Activated naive CD4-positive, alpha-beta T cell treated with anti-CD3 and anti-CD28 coated beads for 36 hours (primary cell): ENCODE measurements at regions of chr18 and their contacts with region 1.

Region 1: DNA sequence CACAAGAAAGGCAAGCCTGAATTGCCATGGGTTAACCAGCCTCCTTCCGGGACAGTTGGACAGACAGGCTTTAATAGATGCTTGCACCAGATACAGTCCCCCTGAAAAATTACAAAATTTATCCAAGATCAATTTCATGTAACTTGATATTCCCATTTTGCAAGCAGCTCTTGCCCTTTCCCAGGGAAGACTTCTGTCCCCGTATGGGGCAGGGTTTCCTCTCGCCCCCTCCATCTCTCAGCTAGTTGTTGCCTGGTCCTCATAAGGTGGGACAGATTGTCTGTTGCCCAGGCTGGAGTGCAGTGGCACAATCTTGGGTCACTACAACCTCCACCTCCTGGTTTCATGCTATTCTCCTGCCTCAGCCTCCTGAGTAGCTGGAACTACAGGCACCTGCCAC is 61.2 kb downstream of the TTC39C start:
- DNase-seq: no peak
- H3K4me3 Mint-ChIP-seq: no peak overlapping the region
- H3K27ac Mint-ChIP-seq: peak overlapping the region; percentile 82
- H3K4me1 Mint-ChIP-seq: peaks cover 32% of the 10 kb centered on the region
- H3K27me3 Mint-ChIP-seq: no peaks in the 10 kb centered on the region

Region 2: GRCh38 chr18:23828426-23828825 is 247.3 kb before region 1 on chr18:
- CTCF ChIA-PET with region 1: no interaction called
- intact Hi-C with region 1: loop called (anchors 1 kb)
- DNase-seq: peak; percentile 61
- H3K4me3 Mint-ChIP-seq: no peak overlapping the region
- H3K27ac Mint-ChIP-seq: no peak overlapping the region
- H3K4me1 Mint-ChIP-seq: peaks cover 37% of the 10 kb centered on the region
- H3K27me3 Mint-ChIP-seq: no peaks in the 10 kb centered on the region

Region 3: DNA sequence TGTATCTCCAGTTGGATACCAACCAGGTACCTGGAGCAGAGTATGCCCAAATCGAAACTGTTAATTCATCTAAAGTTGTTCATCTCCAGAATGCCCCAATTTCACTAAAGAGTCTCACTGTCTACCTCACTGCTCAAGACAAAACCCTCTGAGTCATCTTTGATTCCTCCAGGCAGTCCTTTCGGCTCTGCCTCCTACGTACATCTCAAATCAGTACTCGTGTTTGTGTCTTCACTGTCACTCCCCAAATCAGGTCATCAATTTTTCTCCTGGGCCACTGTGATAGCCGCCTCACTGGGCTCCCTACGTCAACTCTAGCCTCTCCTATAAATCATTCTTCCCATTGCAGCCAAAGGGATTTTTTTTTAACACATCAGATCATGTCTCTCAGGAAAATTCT is 103.3 kb before region 1 on chr18:
- CTCF ChIA-PET with region 1: interaction called, 3 read pairs
- intact Hi-C with region 1: loop called (anchors 1 kb)
- DNase-seq: peak; percentile 55
- H3K4me3 Mint-ChIP-seq: no peak overlapping the region
- H3K27ac Mint-ChIP-seq: no peak overlapping the region
- H3K4me1 Mint-ChIP-seq: peaks cover 53% of the 10 kb centered on the region
- H3K27me3 Mint-ChIP-seq: no peaks in the 10 kb centered on the region

Region 4: GRCh38 chr18:24014062-24014985 is 61.4 kb before region 1 on chr18 and contains the start of gene TTC39C:
- CTCF ChIA-PET with region 1: interaction called, 3 read pairs
- intact Hi-C with region 1: loop called (anchors 1 kb)
- DNase-seq: peak; percentile 87
- H3K4me3 Mint-ChIP-seq: peak within 1 kb of the TSS; percentile 91
- H3K27ac Mint-ChIP-seq: peak within 1 kb of the TSS; percentile 89
- H3K4me1 Mint-ChIP-seq: peaks cover 69% of the 10 kb centered on the region
- H3K27me3 Mint-ChIP-seq: no peaks in the 10 kb centered on the region
- total RNA-seq, gene TTC39C: 39.9 to 44.2 TPM

Region 5: GRCh38 chr18:24051031-24051947 is 24.4 kb before region 1 on chr18:
- CTCF ChIA-PET with region 1: interaction called, 5 read pairs
- intact Hi-C with region 1: loop called (anchors 1 kb)
- DNase-seq: no peak
- H3K4me3 Mint-ChIP-seq: peak overlapping the region; percentile 5
- H3K27ac Mint-ChIP-seq: peak overlapping the region; percentile 72
- H3K4me1 Mint-ChIP-seq: peaks cover 75% of the 10 kb centered on the region
- H3K27me3 Mint-ChIP-seq: no peaks in the 10 kb centered on the region

Region 6: DNA sequence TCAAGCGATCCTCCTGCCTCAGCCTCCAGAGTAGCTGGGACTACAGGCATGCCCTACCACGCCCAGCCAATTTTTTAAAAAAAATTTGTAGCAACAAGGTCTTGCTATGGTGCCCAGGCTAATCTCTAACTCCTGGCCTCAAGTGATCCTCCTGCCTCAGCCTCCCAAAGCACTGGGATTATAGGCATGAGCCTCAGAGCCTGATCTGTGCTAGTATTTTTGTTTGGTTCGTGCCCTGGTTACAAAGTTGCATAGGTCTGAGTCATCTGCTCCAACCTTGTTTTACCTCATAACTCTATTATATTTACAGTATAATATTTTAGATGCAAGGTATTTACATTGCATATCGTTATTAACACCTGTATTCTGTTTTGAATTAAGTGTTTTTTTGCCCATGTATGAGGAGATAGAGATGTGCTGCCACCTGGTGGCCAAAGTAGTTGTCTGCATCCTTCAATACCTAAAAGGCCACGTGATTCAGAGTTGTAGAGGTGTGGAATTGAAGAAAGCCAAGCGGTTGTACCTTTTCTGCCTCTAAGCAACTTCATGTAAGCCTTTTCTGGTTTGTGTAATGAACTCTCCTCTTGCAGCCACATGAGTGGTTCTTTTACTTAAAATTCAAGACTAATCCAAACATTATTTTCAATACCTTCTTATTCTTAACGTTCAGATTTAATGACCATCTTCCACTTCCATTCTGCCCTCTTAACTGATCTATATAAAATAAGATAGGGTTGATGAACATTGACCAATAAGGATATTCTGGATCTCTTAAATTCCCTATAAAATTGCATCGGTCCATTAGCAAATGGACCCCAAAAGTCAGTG is 43.2 kb after region 1 on chr18:
- CTCF ChIA-PET with region 1: interaction called, 9 read pairs
- intact Hi-C with region 1: loop called (anchors 1 kb)
- DNase-seq: peak; percentile 91
- H3K4me3 Mint-ChIP-seq: no peak overlapping the region
- H3K27ac Mint-ChIP-seq: peak overlapping the region; percentile 38
- H3K4me1 Mint-ChIP-seq: peaks cover 15% of the 10 kb centered on the region
- H3K27me3 Mint-ChIP-seq: no peaks in the 10 kb centered on the region

Region 7: GRCh38 chr18:24380163-24380747 is 304.5 kb after region 1 on chr18:
- CTCF ChIA-PET with region 1: no interaction called
- intact Hi-C with region 1: no loop called
- DNase-seq: no peak
- H3K4me3 Mint-ChIP-seq: no peak overlapping the region
- H3K27ac Mint-ChIP-seq: no peak overlapping the region
- H3K4me1 Mint-ChIP-seq: peaks cover 7% of the 10 kb centered on the region
- H3K27me3 Mint-ChIP-seq: no peaks in the 10 kb centered on the region